Caco-2 (cell line): ENCODE measurements at regions of chr19 and their contacts with region 1.

Region 1: GRCh38 chr19:2782936-2783780 is at the start of gene SGTA:
- DNase-seq: peak; percentile 97 to 99
- H3K4me3 ChIP-seq: peak within 1 kb of the TSS; percentile 85
- H3K4me3 Mint-ChIP-seq: peak within 1 kb of the TSS; percentile 75
- H3K27ac Mint-ChIP-seq: peak within 1 kb of the TSS; percentile 96
- H3K4me1 ChIP-seq: peaks cover 7% of the 10 kb centered on the region
- H3K4me1 Mint-ChIP-seq: peaks cover 6% of the 10 kb centered on the region
- H3K27me3 ChIP-seq: no peaks in the 10 kb centered on the region
- H3K27me3 Mint-ChIP-seq: no peaks in the 10 kb centered on the region
- CTCF ChIP-seq: peak; percentile 25 to 29
- total RNA-seq, gene SGTA: 90.1 TPM in 2 replicates

Region 2: DNA sequence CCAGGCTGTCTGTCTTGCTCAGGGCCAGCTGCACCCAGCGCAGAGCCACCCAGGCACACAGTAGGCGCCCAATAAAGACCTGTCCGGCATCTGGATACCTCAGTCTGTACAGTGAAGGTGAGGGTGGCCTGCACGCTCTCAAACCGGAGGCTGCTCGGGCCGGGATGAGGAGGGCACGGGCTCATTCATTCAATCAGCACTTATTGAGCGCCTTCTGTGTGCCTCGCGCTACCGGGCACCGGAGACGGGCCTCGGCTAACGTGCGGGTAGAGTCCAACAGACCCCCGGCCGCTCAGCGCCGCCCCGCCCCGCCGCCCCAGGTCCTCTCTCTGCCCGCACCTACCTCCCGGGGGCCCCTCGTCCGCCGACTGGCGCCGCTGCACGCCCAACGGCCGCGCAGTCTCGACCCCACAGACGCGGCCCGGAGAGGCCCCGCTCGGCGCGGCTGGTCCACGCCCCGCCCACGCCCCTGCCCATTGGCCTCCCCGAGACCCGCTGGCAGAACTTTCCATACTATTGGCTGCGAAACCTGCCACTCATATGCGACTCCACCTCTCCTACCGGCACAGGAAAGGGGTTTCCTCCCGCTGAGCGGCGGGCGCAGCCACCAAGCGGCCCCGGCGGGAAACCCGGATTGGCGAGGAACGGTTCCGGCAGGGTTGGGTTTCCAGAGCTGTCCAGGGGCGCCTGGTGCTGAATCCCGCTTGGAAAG is 43.4 kb before region 1 on chr19 and contains the start of gene SLC39A3:
- CTCF ChIA-PET with region 1: no interaction called
- POLR2A ChIA-PET with region 1: no interaction called
- intact Hi-C with region 1: loop called (anchors 2 kb)
- DNase-seq: peak; percentile 99
- H3K4me3 ChIP-seq: peak within 1 kb of the TSS; percentile 70
- H3K4me3 Mint-ChIP-seq: peak within 1 kb of the TSS; percentile 78
- H3K27ac Mint-ChIP-seq: peak within 1 kb of the TSS; percentile 63
- H3K4me1 ChIP-seq: no peaks in the 10 kb centered on the region
- H3K4me1 Mint-ChIP-seq: no peaks in the 10 kb centered on the region
- H3K27me3 ChIP-seq: no peaks in the 10 kb centered on the region
- H3K27me3 Mint-ChIP-seq: no peaks in the 10 kb centered on the region
- CTCF ChIP-seq: no peak
- total RNA-seq, gene SLC39A3: 33.2 and 35.0 TPM in 2 replicates

Region 3: DNA sequence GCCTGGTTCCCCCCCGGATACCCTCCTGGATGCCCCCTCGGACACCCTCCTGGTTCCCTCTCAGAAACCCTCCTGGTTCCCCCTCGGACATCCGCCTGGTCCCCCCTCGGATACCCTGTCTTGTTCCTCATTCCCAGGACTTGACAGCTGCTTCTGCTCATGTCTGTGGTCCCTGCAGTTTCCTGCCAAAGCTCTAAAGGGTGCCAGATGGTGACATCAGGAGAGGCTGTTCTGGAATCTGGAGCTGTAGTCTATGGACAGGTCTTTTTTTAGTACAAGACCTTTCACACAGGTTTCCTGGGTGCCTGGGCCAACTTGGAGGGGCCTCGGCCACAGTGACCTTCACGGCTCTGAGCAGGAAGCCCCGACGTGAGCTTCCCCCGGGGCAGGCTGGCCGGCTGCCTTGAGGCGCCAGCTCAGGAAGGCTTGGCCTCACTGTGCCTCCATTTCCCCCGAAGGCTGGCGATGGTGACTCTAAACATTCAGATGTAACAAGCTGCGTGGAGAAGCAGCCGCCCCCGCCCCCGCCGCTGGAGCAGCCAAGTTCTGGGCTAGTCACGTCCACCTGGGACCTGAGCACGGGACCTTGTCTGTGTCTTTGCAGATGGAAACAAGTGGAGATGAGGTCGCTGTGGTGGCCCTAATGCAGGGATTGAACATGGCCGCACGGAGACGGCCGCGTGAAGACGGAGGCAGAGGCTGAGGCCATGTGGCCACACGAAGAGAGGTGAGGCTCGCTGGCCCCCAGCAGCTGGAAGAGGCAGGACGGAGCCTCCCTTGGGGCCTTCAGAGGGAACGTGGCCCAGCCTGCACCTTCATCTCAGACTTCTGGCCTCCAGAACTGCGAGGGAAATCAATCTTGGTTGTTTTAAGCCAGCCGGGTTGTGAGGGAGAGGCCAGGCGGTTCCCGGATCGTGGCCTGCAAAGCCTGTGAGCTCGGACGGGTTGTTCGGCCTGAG is 12.8 kb before region 1 on chr19:
- CTCF ChIA-PET with region 1: no interaction called
- POLR2A ChIA-PET with region 1: no interaction called
- intact Hi-C with region 1: no loop called
- DNase-seq: no peak
- H3K4me3 ChIP-seq: no peak overlapping the region
- H3K4me3 Mint-ChIP-seq: no peak overlapping the region
- H3K27ac Mint-ChIP-seq: no peak overlapping the region
- H3K4me1 ChIP-seq: no peaks in the 10 kb centered on the region
- H3K4me1 Mint-ChIP-seq: no peaks in the 10 kb centered on the region
- H3K27me3 ChIP-seq: no peaks in the 10 kb centered on the region
- H3K27me3 Mint-ChIP-seq: no peaks in the 10 kb centered on the region
- CTCF ChIP-seq: no peak

Region 4: DNA sequence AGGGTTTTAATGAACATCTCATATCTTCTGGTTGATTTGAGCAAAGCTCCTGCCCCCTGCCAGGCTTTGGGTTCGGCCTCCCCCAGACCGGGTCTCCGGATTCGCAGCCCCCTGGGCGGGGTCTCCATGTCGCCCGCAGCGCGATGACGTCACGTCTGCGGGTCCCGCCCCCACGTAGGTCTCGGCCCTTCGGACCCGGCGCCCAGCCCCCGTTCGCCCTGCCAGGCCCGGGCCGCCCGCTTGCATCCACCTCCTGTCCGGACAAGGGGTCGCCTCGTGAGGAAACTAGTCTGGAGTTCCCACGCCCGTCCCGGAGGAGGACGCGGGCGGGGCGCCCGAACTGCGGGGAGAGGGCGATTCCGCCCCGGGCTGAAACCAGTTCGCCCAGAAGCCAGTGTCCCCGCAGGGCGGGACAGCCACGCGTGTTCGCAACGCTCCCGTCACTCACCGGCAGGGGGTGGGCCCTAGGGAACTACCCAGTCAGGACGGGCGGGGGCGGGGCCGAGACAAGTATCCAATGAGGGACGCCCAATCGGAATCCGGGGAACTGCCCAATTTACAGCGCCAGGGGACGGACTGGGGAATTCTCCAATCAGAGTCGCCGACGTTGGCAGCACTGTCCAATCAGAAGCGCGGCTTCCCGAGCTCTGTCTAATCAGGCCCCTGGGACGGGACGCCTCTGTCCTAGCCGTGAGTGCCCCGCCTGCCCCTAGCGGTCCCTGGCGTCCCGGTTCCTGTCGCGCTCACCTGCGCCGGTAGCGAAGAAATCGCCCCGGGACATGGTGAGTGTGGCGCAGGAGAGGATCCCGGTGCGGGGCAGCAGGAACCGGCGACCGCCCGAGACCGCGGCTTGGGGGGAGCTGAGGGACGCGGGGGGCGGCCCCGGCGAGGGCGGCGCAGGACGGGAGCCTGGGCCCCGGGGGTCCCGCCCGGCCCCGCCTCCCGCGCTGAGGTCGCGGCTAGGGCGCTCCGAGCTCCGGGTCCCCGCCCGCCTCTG is 57.9 kb after region 1 on chr19 and contains the start of gene ZNF555:
- CTCF ChIA-PET with region 1: interaction called, 3 read pairs
- POLR2A ChIA-PET with region 1: no interaction called
- intact Hi-C with region 1: loop called (anchors 2 kb)
- DNase-seq: peak; percentile 98 to 99
- H3K4me3 ChIP-seq: peak within 1 kb of the TSS; percentile 90
- H3K4me3 Mint-ChIP-seq: peak within 1 kb of the TSS; percentile 85
- H3K27ac Mint-ChIP-seq: peak within 1 kb of the TSS; percentile 93
- H3K4me1 ChIP-seq: no peaks in the 10 kb centered on the region
- H3K4me1 Mint-ChIP-seq: peaks cover 6% of the 10 kb centered on the region
- H3K27me3 ChIP-seq: no peaks in the 10 kb centered on the region
- H3K27me3 Mint-ChIP-seq: no peaks in the 10 kb centered on the region
- CTCF ChIP-seq: peak; percentile 56 to 61
- total RNA-seq, gene ZNF555: 4.7 and 6.2 TPM in 2 replicates

Region 5: DNA sequence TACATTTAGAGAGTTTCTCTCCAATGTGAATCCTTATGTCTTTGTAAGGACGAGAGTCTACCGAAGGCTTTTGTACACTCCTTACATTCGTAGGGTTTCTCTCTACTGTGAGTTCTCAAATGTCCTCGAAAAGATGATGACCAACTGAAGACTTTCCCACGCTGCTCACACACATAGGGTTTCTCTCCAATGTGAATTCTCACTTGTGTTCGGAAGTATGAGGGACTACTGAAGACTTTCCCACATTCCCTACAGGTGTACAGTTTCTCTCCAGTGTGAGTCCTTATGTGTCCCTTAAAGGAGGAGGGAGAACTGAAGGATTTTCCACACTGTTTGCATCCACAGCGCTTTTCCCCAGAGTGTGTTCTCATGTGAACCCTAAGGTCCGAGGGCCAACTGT is 113.5 kb after region 1 on chr19:
- CTCF ChIA-PET with region 1: no interaction called
- POLR2A ChIA-PET with region 1: no interaction called
- intact Hi-C with region 1: no loop called
- DNase-seq: no peak
- H3K4me3 ChIP-seq: no peak overlapping the region
- H3K4me3 Mint-ChIP-seq: no peak overlapping the region
- H3K27ac Mint-ChIP-seq: no peak overlapping the region
- H3K4me1 ChIP-seq: no peaks in the 10 kb centered on the region
- H3K4me1 Mint-ChIP-seq: no peaks in the 10 kb centered on the region
- H3K27me3 ChIP-seq: no peaks in the 10 kb centered on the region
- H3K27me3 Mint-ChIP-seq: no peaks in the 10 kb centered on the region
- CTCF ChIP-seq: no peak

Region 6: DNA sequence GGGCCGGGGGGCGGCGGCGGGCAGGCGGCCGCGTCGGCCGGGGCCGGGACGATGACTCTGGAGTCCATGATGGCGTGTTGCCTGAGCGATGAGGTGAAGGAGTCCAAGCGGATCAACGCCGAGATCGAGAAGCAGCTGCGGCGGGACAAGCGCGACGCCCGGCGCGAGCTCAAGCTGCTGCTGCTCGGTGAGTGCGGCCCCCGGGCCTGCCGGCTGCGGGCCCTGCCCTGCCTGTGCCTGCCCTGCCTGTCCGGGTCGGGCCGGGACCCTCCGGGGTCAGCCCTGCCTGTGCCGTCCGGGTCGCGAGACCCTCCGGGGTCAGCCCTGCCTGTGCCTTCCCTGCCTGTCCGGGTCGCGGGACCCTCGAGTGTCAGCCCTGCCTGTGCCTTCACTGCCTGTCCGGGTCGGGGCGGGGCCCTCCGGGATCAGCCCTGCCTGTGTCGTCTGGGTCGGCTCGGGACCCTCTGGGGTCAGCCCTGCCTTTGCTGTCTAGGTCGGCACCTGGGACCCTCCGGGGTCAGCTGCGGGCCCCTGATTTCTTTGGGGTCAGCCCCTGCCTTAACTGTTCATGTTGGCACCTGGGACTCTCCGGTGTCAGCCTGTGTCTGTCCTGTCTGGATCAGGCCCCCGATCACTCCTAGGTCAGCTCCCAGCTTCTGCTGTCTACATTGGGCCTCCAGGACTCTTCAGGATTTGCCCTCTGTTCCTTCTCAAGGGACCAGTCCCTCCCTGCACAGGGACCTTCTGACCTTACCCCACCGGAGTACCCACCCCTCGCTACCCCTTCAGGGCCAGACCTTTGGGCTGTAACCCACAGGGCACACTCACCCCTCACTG is 311.7 kb after region 1 on chr19:
- CTCF ChIA-PET with region 1: no interaction called
- POLR2A ChIA-PET with region 1: interaction called, 11 read pairs
- intact Hi-C with region 1: no loop called
- DNase-seq: no peak
- H3K4me3 ChIP-seq: peak overlapping the region; percentile 99
- H3K4me3 Mint-ChIP-seq: peak overlapping the region; percentile 87
- H3K27ac Mint-ChIP-seq: peak overlapping the region; percentile 89
- H3K4me1 ChIP-seq: peaks cover 35% of the 10 kb centered on the region
- H3K4me1 Mint-ChIP-seq: no peaks in the 10 kb centered on the region
- H3K27me3 ChIP-seq: no peaks in the 10 kb centered on the region
- H3K27me3 Mint-ChIP-seq: no peaks in the 10 kb centered on the region
- CTCF ChIP-seq: no peak